K562 (cell line): ENCODE measurements at regions of chr4 and their contacts with region 1.

Region 1: GRCh38 chr4:183840311-183840710 is 64.8 kb upstream of the STOX2 start:
- DNase-seq: peak; percentile 62 to 78 (median 65)
- ATAC-seq: peak; percentile 93
- H3K4me3 ChIP-seq: no peak overlapping the region
- H3K27ac ChIP-seq: no peak overlapping the region
- H3K4me1 ChIP-seq: no peaks in the 10 kb centered on the region
- H3K27me3 ChIP-seq: peaks cover 0 to 5% of the 10 kb centered on the region in 2 experiments; a peak in 2 of 5 replicates
- CTCF ChIP-seq: peak; percentile 81 to 88 (median 82)
- EP300 ChIP-seq: no peak
- POLR2A ChIP-seq: no peak
- RAD21 ChIP-seq: peak; percentile 90 to 91

Region 2: GRCh38 chr4:184100297-184100885 is 260.1 kb after region 1 on chr4:
- CTCF ChIA-PET with region 1: interaction called, 11 read pairs
- POLR2A ChIA-PET with region 1: no interaction called
- in situ Hi-C with region 1: loop called (anchors 5 kb)
- intact Hi-C with region 1: loop called (anchors 1 kb)
- DNase-seq: peak; percentile 57 to 74 (median 71)
- ATAC-seq: peak; percentile 95
- H3K4me3 ChIP-seq: no peak overlapping the region
- H3K27ac ChIP-seq: no peak overlapping the region
- H3K4me1 ChIP-seq: peaks cover 0 to 5% of the 10 kb centered on the region in 2 experiments; a peak in 2 of 5 replicates
- H3K27me3 ChIP-seq: peaks cover 2 to 54% of the 10 kb centered on the region in 2 experiments
- CTCF ChIP-seq: peak; percentile 82 to 88 (median 87)
- EP300 ChIP-seq: no peak
- POLR2A ChIP-seq: no peak
- RAD21 ChIP-seq: peak; percentile 78 to 79

Region 3: GRCh38 chr4:184250795-184251669 is 410.7 kb after region 1 on chr4:
- CTCF ChIA-PET with region 1: no interaction called
- POLR2A ChIA-PET with region 1: no interaction called
- in situ Hi-C with region 1: no loop called
- intact Hi-C with region 1: loop called (anchors 2 kb)
- DNase-seq: peak; percentile 57 to 69 (median 62)
- ATAC-seq: peak; percentile 97
- H3K4me3 ChIP-seq: no peak overlapping the region
- H3K27ac ChIP-seq: no peak overlapping the region
- H3K4me1 ChIP-seq: peaks cover 0 to 6% of the 10 kb centered on the region in 2 experiments; a peak in 2 of 5 replicates
- H3K27me3 ChIP-seq: peaks cover 5 to 14% of the 10 kb centered on the region in 2 experiments; a peak in 3 of 5 replicates
- CTCF ChIP-seq: peak; percentile 54 to 69 (median 61); a peak in 5 of 6 replicates
- EP300 ChIP-seq: no peak
- POLR2A ChIP-seq: no peak
- RAD21 ChIP-seq: peak; percentile 49 to 58